CD4-positive, alpha-beta memory T cell (primary cell): ENCODE measurements at regions of chr4 and their contacts with region 1.

Region 1: GRCh38 chr4:108224611-108225053 is 55.9 kb upstream of the LEF1 start:
- DNase-seq: no peak
- H3K4me3 ChIP-seq: no peak overlapping the region
- H3K4me3 Mint-ChIP-seq: no peak overlapping the region
- H3K27ac ChIP-seq: no peak overlapping the region
- H3K27ac Mint-ChIP-seq: no peak overlapping the region
- H3K4me1 ChIP-seq: no peaks in the 10 kb centered on the region
- H3K4me1 Mint-ChIP-seq: peaks cover 0 to 3% (median 2%) of the 10 kb centered on the region in 4 donors
- H3K27me3 ChIP-seq: no peaks in the 10 kb centered on the region
- H3K27me3 Mint-ChIP-seq: no peaks in the 10 kb centered on the region

Region 2: GRCh38 chr4:108303488-108304177 is 79.0 kb after region 1 on chr4:
- CTCF ChIA-PET with region 1: no interaction called
- POLR2A ChIA-PET with region 1: no interaction called
- intact Hi-C with region 1: loop called (anchors 5 kb)
- DNase-seq: no peak
- H3K4me3 ChIP-seq: no peak overlapping the region
- H3K4me3 Mint-ChIP-seq: no peak overlapping the region
- H3K27ac ChIP-seq: no peak overlapping the region
- H3K27ac Mint-ChIP-seq: no peak overlapping the region
- H3K4me1 ChIP-seq: peaks cover 11% of the 10 kb centered on the region
- H3K4me1 Mint-ChIP-seq: peaks cover 7 to 10% (median 9%) of the 10 kb centered on the region in 4 donors
- H3K27me3 ChIP-seq: no peaks in the 10 kb centered on the region
- H3K27me3 Mint-ChIP-seq: peaks cover 0 to 3% of the 10 kb centered on the region in 2 donors